ENCODE measurements at regions of chr4 and their contacts with region 1.

Region 1: GRCh38 chr4:15778289-15779241 is at the start of gene CD38:
- DNase-seq: peak; percentile 79
- H3K4me3 Mint-ChIP-seq: peak within 1 kb of the TSS; percentile 84
- H3K27ac Mint-ChIP-seq: peak within 1 kb of the TSS; percentile 81
- H3K4me1 Mint-ChIP-seq: peaks cover 72% of the 10 kb centered on the region
- H3K27me3 Mint-ChIP-seq: peaks cover 20% of the 10 kb centered on the region
- total RNA-seq, gene CD38: 128 TPM

Region 2: DNA sequence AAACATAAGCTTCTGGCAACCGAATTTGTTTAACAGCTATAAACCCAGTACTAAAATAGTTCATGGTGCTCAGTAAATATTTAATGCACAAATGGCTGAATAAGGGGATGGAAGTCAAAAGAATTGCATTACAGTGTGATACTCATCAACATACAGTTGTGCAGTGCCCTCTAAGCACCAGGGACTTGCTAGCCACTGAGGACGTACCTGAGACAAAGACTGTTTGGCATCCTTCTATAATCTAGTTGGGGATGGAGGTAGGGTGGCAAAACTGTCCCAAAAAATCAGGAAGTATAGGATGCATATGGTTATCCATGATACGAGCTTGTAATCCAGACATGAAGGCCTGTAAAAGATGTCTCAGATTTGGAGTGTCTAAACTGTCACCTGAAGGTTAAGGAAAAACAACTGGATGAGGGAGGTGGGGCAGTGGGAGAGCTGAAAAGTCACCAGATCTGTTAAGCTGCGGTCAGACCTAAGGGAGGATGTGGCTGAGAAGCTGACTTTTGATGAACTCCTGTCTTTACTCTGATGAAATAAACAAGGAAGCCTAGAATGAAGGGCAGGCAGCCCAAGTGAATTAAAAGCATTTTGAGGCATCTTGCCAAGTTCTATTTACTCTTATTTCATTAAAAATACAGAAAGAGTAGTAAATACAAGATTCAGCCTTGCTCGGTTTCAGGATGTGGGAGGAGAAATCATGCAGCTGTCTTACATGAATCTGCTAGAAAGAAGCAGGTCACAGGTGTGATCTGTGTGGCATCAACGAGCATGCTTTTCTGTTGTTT is 12.5 kb before region 1 on chr4:
- CTCF ChIA-PET with region 1: interaction called, 11 read pairs
- POLR2A ChIA-PET with region 1: interaction called, 51 read pairs
- DNase-seq: peak; percentile 75
- H3K4me3 Mint-ChIP-seq: peak overlapping the region; percentile 49
- H3K27ac Mint-ChIP-seq: peak overlapping the region; percentile 79
- H3K4me1 Mint-ChIP-seq: peaks cover 72% of the 10 kb centered on the region
- H3K27me3 Mint-ChIP-seq: no peaks in the 10 kb centered on the region

Region 3: GRCh38 chr4:16043642-16044498 is 265.3 kb after region 1 on chr4:
- CTCF ChIA-PET with region 1: no interaction called
- POLR2A ChIA-PET with region 1: no interaction called
- DNase-seq: no peak
- H3K4me3 Mint-ChIP-seq: no peak overlapping the region
- H3K27ac Mint-ChIP-seq: no peak overlapping the region
- H3K4me1 Mint-ChIP-seq: no peaks in the 10 kb centered on the region
- H3K27me3 Mint-ChIP-seq: peaks cover 8% of the 10 kb centered on the region